AG04450 (cell line): ENCODE measurements at regions of chr19 and their contacts with region 1.

Region 1: GRCh38 chr19:2950286-2951124 is 5.7 kb upstream of the ZNF77 start:
- DNase-seq: peak; percentile 99
- H3K4me3 ChIP-seq: peak overlapping the region; percentile 88
- H3K27ac ChIP-seq: peak overlapping the region; percentile 73
- H3K27me3 ChIP-seq: no peaks in the 10 kb centered on the region
- CTCF ChIP-seq: no peak

Region 2: DNA sequence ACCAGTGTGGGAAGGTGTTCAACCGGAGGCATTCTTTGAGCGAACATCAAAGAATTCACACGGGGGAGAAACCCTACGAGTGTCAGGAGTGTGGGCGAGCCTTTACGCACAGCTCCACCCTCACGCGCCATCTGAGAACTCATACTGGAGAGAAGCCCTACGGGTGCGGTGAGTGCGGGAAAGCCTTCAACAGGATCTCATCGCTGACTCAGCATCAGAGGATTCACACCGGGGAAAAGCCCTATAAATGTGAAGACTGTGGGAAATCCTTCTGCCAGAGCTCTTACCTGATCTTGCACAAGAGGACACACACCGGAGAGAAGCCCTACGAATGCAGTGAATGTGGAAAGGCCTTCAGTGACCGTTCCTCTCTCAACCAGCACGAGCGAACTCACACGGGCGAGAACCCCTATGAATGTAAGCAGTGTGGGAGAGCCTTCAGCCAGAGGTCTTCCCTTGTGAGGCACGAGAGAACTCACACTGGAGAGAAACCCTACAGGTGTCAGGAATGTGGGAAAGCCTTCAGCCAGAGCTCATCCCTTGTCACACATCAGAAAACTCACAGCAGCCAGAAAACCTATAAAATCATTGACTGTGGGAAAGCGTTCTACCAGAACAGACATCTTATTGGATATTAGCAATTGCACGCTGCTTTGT is 116.2 kb before region 1 on chr19:
- CTCF ChIA-PET with region 1: no interaction called
- POLR2A ChIA-PET with region 1: no interaction called
- DNase-seq: no peak
- H3K4me3 ChIP-seq: no peak overlapping the region
- H3K27ac ChIP-seq: no peak overlapping the region
- H3K27me3 ChIP-seq: no peaks in the 10 kb centered on the region
- CTCF ChIP-seq: no peak

Region 3: DNA sequence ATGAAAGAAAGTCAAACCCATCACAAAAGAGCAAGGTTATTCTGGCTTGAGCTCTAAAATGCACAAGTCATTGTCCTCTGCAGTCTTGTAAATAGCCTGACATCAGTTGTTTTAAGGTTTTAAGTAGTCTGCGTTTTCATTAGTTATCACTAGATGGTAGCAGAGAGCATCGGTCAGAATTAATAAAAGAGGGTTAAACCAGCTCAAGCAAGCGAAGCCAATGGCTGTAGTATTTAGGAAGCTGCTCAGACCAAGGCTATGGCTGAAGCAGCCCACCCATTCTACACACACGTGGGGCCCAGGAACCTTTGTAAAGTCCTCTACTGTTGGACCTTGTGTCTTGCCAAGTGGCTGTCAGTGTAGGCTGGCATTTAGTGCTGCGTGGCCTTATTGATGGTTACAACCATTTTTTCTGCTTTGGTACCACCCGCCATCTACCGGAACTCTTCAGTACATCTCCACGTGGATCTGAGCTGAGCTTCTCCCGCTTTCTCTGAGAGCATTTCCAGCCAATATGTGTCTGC is 63.1 kb before region 1 on chr19:
- CTCF ChIA-PET with region 1: interaction called, 20 read pairs
- POLR2A ChIA-PET with region 1: no interaction called
- DNase-seq: peak; percentile 27
- H3K4me3 ChIP-seq: no peak overlapping the region
- H3K27ac ChIP-seq: no peak overlapping the region
- H3K27me3 ChIP-seq: no peaks in the 10 kb centered on the region
- CTCF ChIP-seq: peak; percentile 75

Region 4: DNA sequence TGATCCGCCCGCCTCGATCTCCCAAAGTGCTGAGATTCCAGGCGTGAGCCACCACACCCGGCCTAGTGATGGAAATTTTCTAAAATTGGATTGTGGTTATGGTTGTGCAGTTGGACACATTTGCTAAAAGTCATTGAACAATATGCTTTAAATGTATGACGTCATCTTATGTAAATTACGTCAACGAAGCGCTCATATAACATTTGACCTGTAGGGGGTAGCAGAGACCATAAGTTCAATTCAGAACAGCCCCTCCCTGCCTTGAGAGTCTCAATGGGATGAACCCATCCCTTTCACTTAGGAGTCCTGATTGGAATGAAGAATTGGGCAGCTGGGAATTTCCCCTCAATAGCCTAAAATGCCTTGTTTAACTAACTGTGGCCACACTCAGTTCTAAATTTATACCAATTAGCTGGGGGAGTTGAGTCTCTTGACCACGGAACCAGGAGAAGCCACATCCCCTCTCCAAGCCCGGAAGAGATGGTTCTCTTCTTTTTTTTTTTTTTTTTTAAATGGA is 11.6 kb after region 1 on chr19:
- CTCF ChIA-PET with region 1: interaction called, 13 read pairs
- POLR2A ChIA-PET with region 1: no interaction called
- DNase-seq: peak; percentile 66
- H3K4me3 ChIP-seq: no peak overlapping the region
- H3K27ac ChIP-seq: no peak overlapping the region
- H3K27me3 ChIP-seq: no peaks in the 10 kb centered on the region
- CTCF ChIP-seq: peak; percentile 68

Region 5: DNA sequence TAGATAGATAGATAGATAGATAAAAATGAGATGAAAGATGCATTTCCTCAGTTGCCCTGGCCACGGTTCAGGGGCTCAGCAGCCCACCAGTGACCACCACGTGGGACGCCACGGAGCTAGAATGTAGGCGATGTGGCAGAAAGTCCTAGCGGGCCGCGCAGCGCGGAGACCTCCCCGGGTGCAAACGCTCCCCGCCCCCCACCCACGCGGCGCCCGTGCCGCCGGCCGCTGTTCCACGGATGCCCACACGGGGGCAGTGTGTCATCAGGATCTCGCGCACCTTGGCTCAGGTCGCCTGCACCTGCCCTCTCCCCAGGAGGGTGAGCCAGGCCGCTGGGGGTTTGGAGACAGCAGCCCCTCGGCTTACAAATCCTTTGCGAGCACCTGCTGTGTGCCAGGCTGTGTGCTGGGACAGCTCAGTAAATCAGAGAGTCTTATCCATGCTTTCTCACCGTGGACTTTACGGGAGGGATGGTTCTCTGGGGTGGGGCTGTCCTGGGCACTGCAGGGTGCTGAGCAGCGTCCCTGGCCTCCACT is 125.5 kb after region 1 on chr19:
- CTCF ChIA-PET with region 1: interaction called, 12 read pairs
- POLR2A ChIA-PET with region 1: interaction called, 14 read pairs
- DNase-seq: no peak
- H3K4me3 ChIP-seq: peak overlapping the region; percentile 43
- H3K27ac ChIP-seq: no peak overlapping the region
- H3K27me3 ChIP-seq: no peaks in the 10 kb centered on the region
- CTCF ChIP-seq: peak; percentile 85

Region 6: DNA sequence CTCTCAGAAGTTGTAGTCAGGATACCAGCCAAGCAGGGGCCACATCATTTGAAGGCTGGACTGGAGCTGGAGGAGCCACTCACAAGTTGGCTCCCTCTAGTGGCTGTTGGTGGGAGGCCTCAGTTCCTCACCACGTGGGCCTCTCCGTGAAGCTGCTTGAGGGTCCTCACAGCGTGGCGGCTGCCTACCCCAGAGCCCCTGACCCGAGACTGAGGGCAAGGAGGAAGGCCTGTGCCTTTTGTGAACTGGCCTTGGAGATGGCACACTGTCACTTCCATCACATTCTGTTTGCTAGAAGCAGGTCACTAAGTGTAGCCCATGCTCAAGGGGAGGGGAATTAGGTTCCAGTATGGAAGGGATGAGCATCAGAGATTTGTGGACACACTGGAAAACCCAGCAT is 158.3 kb after region 1 on chr19:
- CTCF ChIA-PET with region 1: interaction called, 50 read pairs
- POLR2A ChIA-PET with region 1: interaction called, 11 read pairs
- DNase-seq: peak; percentile 18
- H3K4me3 ChIP-seq: no peak overlapping the region
- H3K27ac ChIP-seq: no peak overlapping the region
- H3K27me3 ChIP-seq: no peaks in the 10 kb centered on the region
- CTCF ChIP-seq: peak; percentile 85

Region 7: GRCh38 chr19:3163230-3163886 is 212.9 kb after region 1 on chr19:
- CTCF ChIA-PET with region 1: interaction called, 28 read pairs
- POLR2A ChIA-PET with region 1: interaction called, 3 read pairs
- DNase-seq: peak; percentile 30
- H3K4me3 ChIP-seq: no peak overlapping the region
- H3K27ac ChIP-seq: no peak overlapping the region
- H3K27me3 ChIP-seq: no peaks in the 10 kb centered on the region
- CTCF ChIP-seq: peak; percentile 95